Activated CD8-positive, alpha-beta T cell treated with anti-CD3 and anti-CD28 coated beads for 36 hours (primary cell): ENCODE measurements at regions of chr2 and their contacts with region 1.

Region 1: GRCh38 chr2:169141713-169142352 is 72.5 kb downstream of the DHRS9 start:
- DNase-seq: peak; percentile 74
- ATAC-seq: peak; percentile 79
- H3K4me3 Mint-ChIP-seq: no peak overlapping the region
- H3K27ac Mint-ChIP-seq: no peak overlapping the region
- H3K4me1 Mint-ChIP-seq: no peaks in the 10 kb centered on the region
- H3K27me3 Mint-ChIP-seq: no peaks in the 10 kb centered on the region
- CTCF ChIP-seq: peak; percentile 88

Region 2: DNA sequence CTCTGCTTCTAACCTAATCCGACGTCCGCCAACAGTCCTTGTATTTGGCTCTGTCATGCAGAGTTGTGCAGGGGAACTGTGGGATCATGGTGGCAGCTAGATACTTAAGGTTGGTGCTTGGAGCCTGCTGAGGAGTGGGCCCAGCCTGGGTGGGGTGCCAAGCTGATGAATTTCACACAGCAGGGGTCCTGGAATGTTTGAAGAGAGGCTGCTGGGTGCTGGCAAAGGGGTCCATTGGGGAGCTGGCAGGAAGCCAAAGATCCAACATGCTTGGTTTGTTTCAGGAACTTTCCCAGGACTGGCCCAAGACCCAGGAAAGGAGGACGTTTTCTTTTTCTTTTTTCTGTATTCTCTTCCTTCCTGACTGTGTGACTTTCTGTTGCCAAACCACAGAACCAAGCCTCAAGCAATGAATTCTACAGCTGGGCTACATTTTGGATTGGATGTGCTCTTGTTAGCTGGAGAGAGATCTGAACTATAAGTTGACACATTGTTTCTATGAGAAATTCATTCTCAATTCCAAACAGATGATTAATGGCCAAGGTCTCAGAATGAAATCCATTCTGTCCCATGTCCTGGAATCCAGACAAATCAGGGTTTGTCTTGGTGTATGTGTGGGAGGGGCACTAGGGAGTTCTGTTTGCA is 22.6 kb before region 1 on chr2:
- CTCF ChIA-PET with region 1: interaction called, 10 read pairs
- POLR2A ChIA-PET with region 1: interaction called, 3 read pairs
- intact Hi-C with region 1: no loop called
- DNase-seq: no peak
- ATAC-seq: no peak
- H3K4me3 Mint-ChIP-seq: no peak overlapping the region
- H3K27ac Mint-ChIP-seq: no peak overlapping the region
- H3K4me1 Mint-ChIP-seq: peaks cover 4% of the 10 kb centered on the region
- H3K27me3 Mint-ChIP-seq: no peaks in the 10 kb centered on the region
- CTCF ChIP-seq: no peak

Region 3: GRCh38 chr2:169159686-169160085 is 17.9 kb after region 1 on chr2:
- CTCF ChIA-PET with region 1: interaction called, 21 read pairs
- POLR2A ChIA-PET with region 1: no interaction called
- intact Hi-C with region 1: no loop called
- DNase-seq: no peak
- ATAC-seq: no peak
- H3K4me3 Mint-ChIP-seq: no peak overlapping the region
- H3K27ac Mint-ChIP-seq: no peak overlapping the region
- H3K4me1 Mint-ChIP-seq: no peaks in the 10 kb centered on the region
- H3K27me3 Mint-ChIP-seq: peaks cover 5% of the 10 kb centered on the region
- CTCF ChIP-seq: no peak